Activated T-helper 1 cell treated with anti-CD3 and anti-CD28 coated beads, Interleukin-12 subunit alpha, Interleukin-12 subunit beta, Interleukin-2, Interleukin-4 antibody, amounts not matched to agents 30 ng/mL and 10 ng/mL and 1 ng/mL, durations not matched to agents 14 hours and 24 hours and 36 hours (primary cell): ENCODE measurements at regions of chrX and their contacts with region 1.

Region 1: GRCh38 chrX:154714925-154715324 is 36.0 kb downstream of the GAB3 start:
- DNase-seq: peak; percentile 38
- H3K4me3 Mint-ChIP-seq: no peak overlapping the region
- H3K27ac Mint-ChIP-seq: no peak overlapping the region
- H3K4me1 Mint-ChIP-seq: peaks cover 75% of the 10 kb centered on the region
- H3K27me3 Mint-ChIP-seq: no peaks in the 10 kb centered on the region

Region 2: DNA sequence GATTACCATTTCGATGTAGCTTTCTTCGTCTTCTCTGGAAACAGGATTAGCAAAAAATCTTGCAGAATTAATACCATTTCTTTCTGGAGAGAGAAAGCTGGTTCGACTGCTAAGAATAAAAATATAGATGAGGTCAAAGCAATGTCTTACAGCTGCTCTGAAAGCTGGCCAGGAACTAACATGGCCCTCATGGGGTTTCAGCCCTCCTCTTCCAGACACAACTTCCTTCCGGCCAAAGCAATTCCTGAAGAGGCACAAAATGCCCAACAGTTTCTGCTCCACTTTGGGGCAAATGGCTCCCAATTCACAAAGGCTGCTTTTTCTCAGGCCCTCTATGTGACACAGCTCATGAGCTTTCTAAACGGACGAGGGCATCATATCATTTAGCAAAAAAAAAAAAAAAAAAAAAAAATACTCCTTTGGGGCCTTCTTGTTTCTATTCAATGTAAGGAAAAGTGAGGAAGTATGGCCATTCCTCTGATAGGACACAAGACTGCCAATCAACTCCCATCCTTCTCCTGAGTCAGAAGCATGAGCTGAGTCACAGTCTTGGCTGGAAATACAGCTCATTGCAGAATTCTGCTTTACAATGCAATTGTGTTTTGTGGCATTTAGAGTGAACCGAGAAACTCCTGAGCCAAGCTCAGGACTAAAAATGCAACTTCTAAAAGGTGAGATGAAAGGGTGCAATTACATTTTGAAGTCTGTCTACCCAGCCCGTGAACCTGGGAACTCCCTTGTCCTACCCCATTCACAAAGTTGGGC is 18.8 kb before region 1 on chrX:
- intact Hi-C with region 1: loop called (anchors 2 kb)
- DNase-seq: no peak
- H3K4me3 Mint-ChIP-seq: peak overlapping the region; percentile 15
- H3K27ac Mint-ChIP-seq: peak overlapping the region; percentile 67
- H3K4me1 Mint-ChIP-seq: peaks cover 34% of the 10 kb centered on the region
- H3K27me3 Mint-ChIP-seq: no peaks in the 10 kb centered on the region

Region 3: GRCh38 chrX:154734061-154734781 is 19.3 kb after region 1 on chrX:
- intact Hi-C with region 1: loop called (anchors 2 kb)
- DNase-seq: no peak
- H3K4me3 Mint-ChIP-seq: peak overlapping the region; percentile 77
- H3K27ac Mint-ChIP-seq: peak overlapping the region; percentile 96
- H3K4me1 Mint-ChIP-seq: peaks cover 94% of the 10 kb centered on the region
- H3K27me3 Mint-ChIP-seq: no peaks in the 10 kb centered on the region

Region 4: DNA sequence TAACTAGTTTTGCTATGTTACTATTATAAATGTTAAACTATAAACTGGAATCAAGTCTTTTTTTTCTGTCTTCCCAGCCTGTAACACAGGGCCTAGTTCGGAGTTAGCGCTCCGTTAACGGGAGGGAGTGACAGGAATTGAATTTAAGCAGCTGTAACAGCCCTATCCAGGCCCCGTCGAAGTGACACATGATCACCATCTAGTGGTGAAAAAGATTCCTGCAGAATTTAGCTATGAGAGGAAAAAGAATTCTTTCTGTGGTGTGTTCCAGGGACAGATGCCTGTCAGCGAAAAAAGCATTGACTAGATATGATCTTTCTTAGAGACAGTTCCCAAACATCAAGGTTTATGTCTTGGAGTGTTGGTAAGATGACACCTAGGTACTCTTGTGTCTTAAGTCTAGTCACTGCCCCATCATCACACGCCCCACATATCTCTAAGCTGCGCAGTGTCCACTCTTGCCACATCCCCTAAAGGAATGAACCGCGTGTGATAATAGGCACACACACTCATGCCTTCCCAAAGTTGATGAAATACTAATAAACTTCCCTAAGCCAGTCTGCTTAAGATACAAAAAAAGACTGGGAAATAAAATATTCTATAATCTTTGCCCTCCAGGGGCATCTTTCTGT is 33.9 kb after region 1 on chrX:
- intact Hi-C with region 1: loop called (anchors 1 kb)
- DNase-seq: peak; percentile 34
- H3K4me3 Mint-ChIP-seq: peak overlapping the region; percentile 82
- H3K27ac Mint-ChIP-seq: peak overlapping the region; percentile 40
- H3K4me1 Mint-ChIP-seq: peaks cover 30% of the 10 kb centered on the region
- H3K27me3 Mint-ChIP-seq: peaks cover 3% of the 10 kb centered on the region

Region 5: GRCh38 chrX:154762523-154763289 is 47.8 kb after region 1 on chrX and contains the start of gene DKC1:
- intact Hi-C with region 1: loop called (anchors 2 kb)
- DNase-seq: peak; percentile 93
- H3K4me3 Mint-ChIP-seq: peak within 1 kb of the TSS; percentile 89
- H3K27ac Mint-ChIP-seq: peak within 1 kb of the TSS; percentile 93
- H3K4me1 Mint-ChIP-seq: peaks cover 31% of the 10 kb centered on the region
- H3K27me3 Mint-ChIP-seq: no peaks in the 10 kb centered on the region
- total RNA-seq, gene DKC1: 186 and 188 TPM in 2 replicates

Region 6: DNA sequence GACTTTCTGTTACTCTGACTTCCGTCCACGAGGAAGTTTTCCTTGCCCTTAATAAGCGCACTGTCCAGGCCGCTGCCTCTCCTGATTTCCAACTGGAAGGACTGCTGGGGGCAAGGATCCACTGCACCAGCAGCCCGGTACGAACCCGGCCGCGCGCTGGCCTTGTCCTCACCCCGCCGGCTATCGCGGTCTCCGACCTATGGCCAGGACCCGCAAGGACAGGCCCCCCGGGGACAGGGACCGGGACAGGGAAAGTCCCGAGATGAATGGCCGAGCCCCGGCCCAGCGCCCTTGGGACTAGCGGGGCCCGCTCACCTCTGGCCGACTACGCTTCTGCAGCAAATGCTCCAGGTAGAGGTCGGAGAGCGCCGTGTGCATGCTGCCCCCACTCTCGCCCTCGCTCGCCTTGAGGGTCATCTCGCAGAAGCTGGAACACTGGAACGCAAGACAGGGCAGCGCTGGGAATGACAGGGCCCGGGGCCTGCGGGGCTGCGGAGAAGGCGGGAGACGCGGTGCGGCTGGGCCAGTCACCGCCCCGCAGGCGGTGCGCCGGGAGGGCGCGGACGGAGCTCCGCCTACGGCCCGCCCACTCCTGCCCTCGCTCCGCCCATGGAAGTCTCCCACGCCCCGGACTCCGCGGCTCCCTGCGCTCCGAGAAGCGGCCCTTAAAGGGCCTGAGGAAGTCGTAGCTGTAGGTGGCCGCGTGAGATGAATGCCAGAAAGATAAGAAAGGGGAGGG is 90.2 kb after region 1 on chrX and contains the start of gene MPP1:
- intact Hi-C with region 1: loop called (anchors 5 kb)
- DNase-seq: peak; percentile 73
- H3K4me3 Mint-ChIP-seq: peak within 1 kb of the TSS; percentile 82
- H3K27ac Mint-ChIP-seq: peak within 1 kb of the TSS; percentile 63
- H3K4me1 Mint-ChIP-seq: peaks cover 45% of the 10 kb centered on the region
- H3K27me3 Mint-ChIP-seq: no peaks in the 10 kb centered on the region
- total RNA-seq, gene MPP1: 27.8 and 28.7 TPM in 2 replicates

Region 7: GRCh38 chrX:154840856-154841255 is 125.9 kb after region 1 on chrX:
- intact Hi-C with region 1: loop called (anchors 1 kb)
- DNase-seq: no peak
- H3K4me3 Mint-ChIP-seq: no peak overlapping the region
- H3K27ac Mint-ChIP-seq: no peak overlapping the region
- H3K4me1 Mint-ChIP-seq: peaks cover 8% of the 10 kb centered on the region
- H3K27me3 Mint-ChIP-seq: peaks cover 6% of the 10 kb centered on the region